ENCODE measurements at regions of chr9 and their contacts with region 1.

Region 1: DNA sequence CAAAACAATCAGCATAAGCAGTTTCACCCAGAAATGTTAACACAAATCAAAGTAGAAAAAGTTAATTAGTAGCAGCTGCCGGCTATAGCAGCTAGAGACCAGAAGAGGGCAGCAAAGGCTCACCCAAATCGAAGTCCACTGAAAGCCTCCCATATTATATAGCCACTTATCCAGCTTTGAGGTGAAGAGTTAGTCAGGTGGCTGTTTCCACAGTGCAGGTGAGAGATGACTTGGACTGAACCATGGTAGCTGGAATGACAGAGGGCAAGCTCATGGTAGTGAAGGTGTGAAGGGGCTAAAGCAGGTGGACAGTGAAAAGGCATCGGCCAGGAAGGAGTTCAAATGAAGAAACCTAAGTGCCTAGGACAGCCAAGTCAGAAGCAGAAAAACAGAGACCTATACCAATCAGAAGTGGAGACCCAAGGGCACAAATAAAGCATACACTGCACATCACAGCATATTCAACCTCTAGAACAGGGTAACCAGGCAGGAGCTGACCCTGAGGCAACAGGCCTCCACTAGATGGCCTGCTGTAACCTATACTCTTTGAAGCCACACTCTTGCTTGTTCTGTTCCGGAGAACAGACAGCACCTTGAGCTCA is 7.2 kb upstream of the RNF38 start:
- DNase-seq: peak in 7 of 10 donors; percentile 36 to 92 (median 55)

Region 2: DNA sequence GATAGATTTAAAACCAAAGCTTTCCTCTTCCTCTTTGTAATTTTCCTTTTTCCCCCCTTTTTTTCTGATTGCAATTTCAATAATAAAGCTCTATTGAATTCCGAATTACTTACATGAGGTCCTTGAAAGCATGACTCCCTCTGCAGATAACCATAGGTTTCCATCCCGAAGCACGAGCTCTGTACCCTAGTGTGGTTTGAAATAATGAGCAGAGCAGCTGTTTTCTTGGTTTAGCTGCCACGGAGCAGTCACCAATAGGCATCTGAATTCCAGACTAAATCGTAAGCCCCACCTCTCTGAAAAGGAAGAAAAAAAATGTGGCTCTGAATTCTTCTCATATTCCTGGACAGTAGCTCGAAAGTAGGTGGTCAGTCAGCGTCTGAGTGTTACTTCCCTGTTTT is 130.4 kb before region 1 on chr9:
- intact Hi-C with region 1: no loop called
- DNase-seq: no peak

Region 3: DNA sequence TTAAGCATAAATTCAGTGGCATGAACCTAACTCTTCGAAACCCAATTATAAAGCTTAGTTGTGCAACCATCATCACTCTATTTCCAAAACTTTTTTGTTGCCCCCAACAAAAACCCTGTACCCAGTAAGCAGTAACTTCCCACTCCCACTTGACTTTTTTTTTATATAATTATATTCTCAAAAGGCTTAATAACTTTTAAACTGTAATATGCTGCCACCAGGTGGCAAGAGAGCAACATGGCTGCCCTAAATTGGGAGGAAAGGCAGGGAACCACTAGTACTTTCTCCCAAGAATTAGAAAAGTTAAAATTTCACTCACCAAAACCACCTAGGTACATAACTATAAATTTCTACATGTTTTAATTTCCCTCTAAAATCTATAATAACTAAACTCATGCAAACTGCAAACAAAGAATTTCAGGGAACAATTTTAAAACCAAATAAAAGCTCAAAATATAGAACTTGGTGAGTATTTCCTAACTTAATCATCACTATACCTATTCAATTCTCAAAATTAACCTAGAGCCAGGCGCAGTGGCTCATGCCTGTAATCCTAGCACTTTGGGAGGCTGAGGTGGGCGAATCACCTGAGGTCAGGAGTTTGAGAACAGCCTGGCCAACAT is 43.0 kb after region 1 on chr9:
- intact Hi-C with region 1: loop called (anchors 1 kb)
- DNase-seq: peak in 4 of 10 donors; percentile 12 to 32 (median 21)

Region 4: GRCh38 chr9:36461323-36461722 is 54.1 kb after region 1 on chr9:
- intact Hi-C with region 1: no loop called
- DNase-seq: no peak

Region 5: GRCh38 chr9:36551129-36551528 is 143.9 kb after region 1 on chr9:
- intact Hi-C with region 1: loop called (anchors 1 kb)
- DNase-seq: no peak

Measured in posterior cingulate gyrus (tissue), 11 donors.